Activated CD4-positive, alpha-beta T cell treated with anti-CD3 and anti-CD28 coated beads for 36 hours (primary cell): ENCODE measurements at regions of chr1 and their contacts with region 1.

Region 1: GRCh38 chr1:66350001-66350547 is 183.9 kb upstream of the SGIP1 start:
- DNase-seq: peak; percentile 78
- ATAC-seq: peak; percentile 59
- H3K4me3 Mint-ChIP-seq: peak overlapping the region; percentile 57
- H3K27ac Mint-ChIP-seq: peak overlapping the region; percentile 88
- H3K4me1 Mint-ChIP-seq: peaks cover 93% of the 10 kb centered on the region
- H3K27me3 Mint-ChIP-seq: no peaks in the 10 kb centered on the region

Region 2: DNA sequence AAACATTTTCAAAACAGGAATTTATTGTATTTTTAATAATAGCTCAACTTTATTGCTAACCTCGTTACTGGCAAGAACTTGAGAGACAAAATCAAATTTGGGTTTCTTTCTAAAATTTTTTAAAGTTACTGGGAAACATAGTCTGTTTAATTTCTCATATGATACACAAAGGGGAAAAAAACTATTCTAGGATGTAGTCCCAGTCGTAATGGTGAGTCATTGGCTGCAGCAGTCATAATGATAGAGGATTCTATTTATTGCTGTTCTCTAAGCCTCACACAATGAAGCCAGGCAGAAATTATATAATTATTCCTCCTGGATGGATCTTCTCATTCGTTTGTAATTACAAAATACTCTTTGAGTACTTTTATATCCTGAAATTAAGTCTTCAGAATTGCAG is 142.6 kb before region 1 on chr1:
- CTCF ChIA-PET with region 1: no interaction called
- POLR2A ChIA-PET with region 1: no interaction called
- intact Hi-C with region 1: no loop called
- DNase-seq: no peak
- ATAC-seq: no peak
- H3K4me3 Mint-ChIP-seq: no peak overlapping the region
- H3K27ac Mint-ChIP-seq: no peak overlapping the region
- H3K4me1 Mint-ChIP-seq: no peaks in the 10 kb centered on the region
- H3K27me3 Mint-ChIP-seq: peaks cover 2% of the 10 kb centered on the region

Region 3: DNA sequence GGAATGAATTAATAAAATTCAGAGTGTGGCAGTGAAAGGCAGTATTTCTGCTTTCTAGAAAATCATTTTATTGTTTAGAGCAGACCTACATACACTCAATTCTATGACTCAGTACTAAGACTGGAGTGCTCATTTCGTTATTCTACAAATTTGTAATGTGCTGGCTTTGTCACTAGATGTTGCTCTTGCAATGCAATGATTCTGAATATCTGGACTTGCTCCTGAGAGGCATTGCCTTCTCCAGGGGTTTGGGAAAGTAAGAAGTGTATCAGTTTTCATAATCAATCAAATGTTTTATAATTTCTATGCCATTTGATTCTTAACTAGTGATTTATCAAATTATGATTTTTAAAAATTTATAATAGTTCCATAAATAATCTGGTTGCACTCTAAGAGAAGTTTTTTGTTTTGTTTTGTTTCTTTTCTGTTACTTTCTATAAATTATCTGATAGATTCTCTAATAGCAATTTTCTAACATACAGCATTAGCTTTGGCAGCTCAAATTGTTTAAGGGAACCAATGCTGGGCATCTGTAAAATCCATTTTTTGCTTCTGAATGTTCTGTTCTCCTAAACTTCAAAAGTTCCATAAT is 96.6 kb before region 1 on chr1:
- CTCF ChIA-PET with region 1: interaction called, 24 read pairs
- POLR2A ChIA-PET with region 1: interaction called, 4 read pairs
- intact Hi-C with region 1: loop called in 1 of 2 experiments (anchors 1 kb)
- DNase-seq: no peak
- ATAC-seq: peak; percentile 81
- H3K4me3 Mint-ChIP-seq: no peak overlapping the region
- H3K27ac Mint-ChIP-seq: no peak overlapping the region
- H3K4me1 Mint-ChIP-seq: peaks cover 49% of the 10 kb centered on the region
- H3K27me3 Mint-ChIP-seq: no peaks in the 10 kb centered on the region

Region 4: DNA sequence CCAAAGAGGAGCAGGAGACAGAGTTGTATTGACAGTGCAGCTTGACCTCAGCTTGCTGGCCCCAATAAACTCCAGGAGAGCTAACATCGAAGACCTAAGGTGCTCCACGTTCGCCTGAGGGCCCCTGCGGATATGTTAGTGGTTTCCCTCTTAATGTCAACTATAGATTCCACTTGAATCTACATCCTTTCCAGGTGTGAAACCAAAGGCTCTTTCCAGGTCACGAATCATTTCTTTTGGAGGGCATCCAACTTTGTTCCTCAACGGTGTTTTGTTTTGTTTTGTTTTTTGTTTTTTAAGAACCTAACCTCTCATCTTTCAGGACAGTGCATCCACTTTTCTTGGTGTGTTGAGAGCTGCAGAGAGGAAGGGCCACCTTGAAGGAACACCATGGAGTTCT is 83.7 kb before region 1 on chr1:
- CTCF ChIA-PET with region 1: no interaction called
- POLR2A ChIA-PET with region 1: no interaction called
- intact Hi-C with region 1: no loop called
- DNase-seq: no peak
- ATAC-seq: no peak
- H3K4me3 Mint-ChIP-seq: no peak overlapping the region
- H3K27ac Mint-ChIP-seq: no peak overlapping the region
- H3K4me1 Mint-ChIP-seq: peaks cover 70% of the 10 kb centered on the region
- H3K27me3 Mint-ChIP-seq: no peaks in the 10 kb centered on the region

Region 5: GRCh38 chr1:66300972-66301451 is 49.1 kb before region 1 on chr1:
- CTCF ChIA-PET with region 1: interaction called, 8 read pairs
- POLR2A ChIA-PET with region 1: no interaction called
- intact Hi-C with region 1: loop called in 1 of 2 experiments (anchors 1 kb)
- DNase-seq: peak; percentile 43
- ATAC-seq: peak; percentile 96
- H3K4me3 Mint-ChIP-seq: peak overlapping the region; percentile 26
- H3K27ac Mint-ChIP-seq: peak overlapping the region; percentile 60
- H3K4me1 Mint-ChIP-seq: peaks cover 48% of the 10 kb centered on the region
- H3K27me3 Mint-ChIP-seq: no peaks in the 10 kb centered on the region

Region 6: GRCh38 chr1:66339944-66340343 is 10.1 kb before region 1 on chr1:
- CTCF ChIA-PET with region 1: interaction called, 48 read pairs
- POLR2A ChIA-PET with region 1: interaction called, 14 read pairs
- intact Hi-C with region 1: loop called (anchors 1 kb)
- DNase-seq: no peak
- ATAC-seq: no peak
- H3K4me3 Mint-ChIP-seq: peak overlapping the region; percentile 69
- H3K27ac Mint-ChIP-seq: peak overlapping the region; percentile 85
- H3K4me1 Mint-ChIP-seq: peaks cover 68% of the 10 kb centered on the region
- H3K27me3 Mint-ChIP-seq: no peaks in the 10 kb centered on the region

Region 7: DNA sequence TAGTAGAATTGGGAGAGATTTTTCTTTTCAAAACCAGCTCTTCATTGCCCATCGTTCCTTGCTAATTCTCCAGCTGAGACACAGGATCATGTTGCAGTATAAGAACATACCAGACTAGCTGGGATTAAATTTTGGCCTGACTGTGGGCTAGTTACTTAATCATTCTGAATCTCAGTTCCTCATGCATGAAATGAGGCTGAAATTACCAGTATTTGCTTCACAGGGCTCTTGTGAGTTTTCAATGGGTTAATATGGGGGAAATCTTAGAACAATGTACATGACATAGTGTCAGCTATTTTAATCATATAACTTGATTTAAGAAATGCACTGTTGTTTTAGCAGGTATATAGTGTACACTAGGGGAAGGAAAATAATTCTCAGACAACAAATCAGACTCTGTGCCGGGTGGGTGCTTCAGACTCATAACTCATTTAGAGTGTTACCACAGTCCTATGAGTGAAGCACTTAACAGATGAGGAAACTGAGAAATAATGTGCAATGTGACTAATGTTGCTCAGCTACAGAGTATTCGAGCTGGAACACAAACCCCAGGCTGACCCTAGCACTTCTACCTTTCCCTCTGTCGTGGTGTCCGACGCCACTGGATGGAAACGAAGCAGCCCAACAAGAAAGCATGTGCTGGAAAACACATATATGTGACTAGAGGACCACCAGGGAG is 46.3 kb after region 1 on chr1:
- CTCF ChIA-PET with region 1: interaction called, 3 read pairs
- POLR2A ChIA-PET with region 1: interaction called, 3 read pairs
- intact Hi-C with region 1: loop called (anchors 1 to 2 kb)
- DNase-seq: peak; percentile 39
- ATAC-seq: peak; percentile 56
- H3K4me3 Mint-ChIP-seq: no peak overlapping the region
- H3K27ac Mint-ChIP-seq: no peak overlapping the region
- H3K4me1 Mint-ChIP-seq: peaks cover 39% of the 10 kb centered on the region
- H3K27me3 Mint-ChIP-seq: peaks cover 2% of the 10 kb centered on the region